Mammary epithelial cell (primary cell): ENCODE measurements at regions of chrX and their contacts with region 1.

Region 1: GRCh38 chrX:154369449-154370299 is 4.8 kb downstream of the FLNA start:
- DNase-seq: peak; percentile 84
- H3K4me3 ChIP-seq: peak overlapping the region; percentile 66 to 79 (median 74)
- H3K27ac ChIP-seq: peak overlapping the region; percentile 79
- H3K4me1 ChIP-seq: peaks cover 51% of the 10 kb centered on the region
- H3K27me3 ChIP-seq: no peaks in the 10 kb centered on the region
- CTCF ChIP-seq: no peak

Region 2: GRCh38 chrX:154321594-154321993 is 48.1 kb before region 1 on chrX:
- CTCF ChIA-PET with region 1: interaction called, 10 read pairs
- dilution Hi-C with region 1: no loop called
- in situ Hi-C with region 1: no loop called
- intact Hi-C with region 1: no loop called
- DNase-seq: no peak
- H3K4me3 ChIP-seq: no peak overlapping the region
- H3K27ac ChIP-seq: no peak overlapping the region
- H3K4me1 ChIP-seq: no peaks in the 10 kb centered on the region
- H3K27me3 ChIP-seq: no peaks in the 10 kb centered on the region
- CTCF ChIP-seq: peak in 1 of 2 donors; percentile 39

Region 3: GRCh38 chrX:154534862-154535670 is 165.4 kb after region 1 on chrX:
- CTCF ChIA-PET with region 1: no interaction called
- dilution Hi-C with region 1: no loop called
- in situ Hi-C with region 1: no loop called
- intact Hi-C with region 1: loop called (anchors 1 kb)
- DNase-seq: peak; percentile 69
- H3K4me3 ChIP-seq: no peak overlapping the region
- H3K27ac ChIP-seq: no peak overlapping the region
- H3K4me1 ChIP-seq: peaks cover 7% of the 10 kb centered on the region
- H3K27me3 ChIP-seq: no peaks in the 10 kb centered on the region
- CTCF ChIP-seq: peak; percentile 94 to 97